Mucosa of descending colon (tissue), 3 donors: ENCODE measurements at regions of chr16 and their contacts with region 1.

Region 1: DNA sequence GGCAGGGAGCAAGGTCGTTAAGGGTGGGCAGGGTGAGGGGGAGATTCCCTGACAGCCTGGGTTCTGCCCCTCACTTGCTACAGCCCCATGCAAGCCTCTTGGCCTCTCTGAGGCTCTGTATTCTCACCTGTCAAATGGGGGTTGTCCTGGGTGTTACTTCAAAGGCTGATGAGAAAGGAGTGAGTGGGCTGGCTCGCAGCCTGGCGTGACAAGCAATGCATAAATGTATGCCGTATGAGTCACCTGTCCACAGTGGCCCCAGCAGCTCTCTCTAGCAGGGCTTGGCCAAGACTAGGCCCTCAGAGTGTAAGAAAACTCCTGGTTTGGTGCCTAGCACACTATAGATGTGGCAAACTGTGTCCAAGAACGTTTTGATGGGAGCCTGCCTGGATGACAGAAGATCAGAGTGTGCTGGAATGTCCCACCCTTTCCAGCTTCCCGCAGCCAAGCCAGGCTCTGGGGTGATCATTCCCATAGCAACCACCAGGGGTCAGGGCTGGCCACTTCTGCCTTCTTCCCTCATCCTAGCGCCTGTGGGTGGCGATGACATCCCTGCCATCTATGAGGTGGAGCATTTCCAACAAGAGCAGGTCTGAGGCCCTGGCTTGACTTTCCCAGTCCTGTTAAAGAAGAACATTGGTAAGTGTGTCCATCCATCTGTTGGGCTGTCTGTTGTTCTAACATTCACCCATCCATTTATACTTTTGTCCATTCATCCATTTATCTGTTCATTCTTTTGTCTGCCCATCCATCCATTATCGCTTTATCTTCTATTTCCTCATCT is 37.2 kb upstream of the ADGRG1 start:
- DNase-seq: peak; percentile 71 to 81 (median 80)
- ATAC-seq: peak; percentile 93
- H3K4me3 ChIP-seq: no peak overlapping the region
- H3K4me1 ChIP-seq: no peaks in the 10 kb centered on the region
- CTCF ChIP-seq: peak; percentile 85

Region 2: DNA sequence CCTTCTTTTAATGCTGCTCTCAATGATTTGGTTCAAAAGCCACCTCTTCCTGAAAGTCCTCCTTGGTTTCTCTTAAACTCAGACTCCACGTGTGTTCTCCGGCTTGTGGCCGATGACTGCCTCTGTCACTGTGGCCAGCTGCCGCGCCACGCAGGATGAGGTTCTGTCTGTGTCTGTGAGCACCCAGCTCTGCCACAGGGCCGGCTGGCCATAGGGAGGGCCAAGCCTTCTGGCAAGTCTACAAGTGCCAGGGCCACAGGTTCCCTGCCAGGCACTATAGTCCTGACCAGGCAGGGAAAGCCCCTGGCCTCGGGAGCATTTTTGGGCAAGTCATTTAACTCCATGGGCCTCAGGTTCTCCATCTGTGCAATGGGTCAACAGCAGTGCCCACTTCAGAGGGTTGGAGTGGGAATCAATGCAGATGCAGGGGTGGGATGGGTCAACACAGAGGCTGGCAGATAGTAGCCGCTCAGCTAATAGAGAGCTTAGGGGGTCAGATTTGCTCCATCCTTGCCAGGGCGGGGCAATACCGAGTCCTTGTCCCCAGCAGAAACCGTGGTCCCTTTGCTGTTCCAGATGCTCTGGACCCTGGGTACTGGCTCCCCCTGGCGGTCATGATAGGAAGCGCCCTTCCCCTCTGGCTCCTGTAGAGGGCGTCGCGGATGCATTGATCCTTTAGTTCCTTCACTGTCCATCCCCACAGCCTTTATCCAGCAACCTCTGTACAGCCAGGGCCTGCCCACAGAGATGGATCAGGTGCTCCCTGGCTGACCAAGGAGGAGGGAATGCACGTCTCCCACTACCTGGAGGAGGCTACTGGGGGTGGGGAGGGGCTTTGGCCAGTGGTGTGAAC is 57.5 kb after region 1 on chr16:
- intact Hi-C with region 1: loop called in 1 of 2 experiments (anchors 5 kb)
- DNase-seq: peak; percentile 81 to 91 (median 91)
- ATAC-seq: peak; percentile 96
- H3K4me3 ChIP-seq: no peak overlapping the region
- H3K4me1 ChIP-seq: no peaks in the 10 kb centered on the region
- CTCF ChIP-seq: peak; percentile 99